ENCODE measurements at regions of chr11 and their contacts with region 1.

Region 1: DNA sequence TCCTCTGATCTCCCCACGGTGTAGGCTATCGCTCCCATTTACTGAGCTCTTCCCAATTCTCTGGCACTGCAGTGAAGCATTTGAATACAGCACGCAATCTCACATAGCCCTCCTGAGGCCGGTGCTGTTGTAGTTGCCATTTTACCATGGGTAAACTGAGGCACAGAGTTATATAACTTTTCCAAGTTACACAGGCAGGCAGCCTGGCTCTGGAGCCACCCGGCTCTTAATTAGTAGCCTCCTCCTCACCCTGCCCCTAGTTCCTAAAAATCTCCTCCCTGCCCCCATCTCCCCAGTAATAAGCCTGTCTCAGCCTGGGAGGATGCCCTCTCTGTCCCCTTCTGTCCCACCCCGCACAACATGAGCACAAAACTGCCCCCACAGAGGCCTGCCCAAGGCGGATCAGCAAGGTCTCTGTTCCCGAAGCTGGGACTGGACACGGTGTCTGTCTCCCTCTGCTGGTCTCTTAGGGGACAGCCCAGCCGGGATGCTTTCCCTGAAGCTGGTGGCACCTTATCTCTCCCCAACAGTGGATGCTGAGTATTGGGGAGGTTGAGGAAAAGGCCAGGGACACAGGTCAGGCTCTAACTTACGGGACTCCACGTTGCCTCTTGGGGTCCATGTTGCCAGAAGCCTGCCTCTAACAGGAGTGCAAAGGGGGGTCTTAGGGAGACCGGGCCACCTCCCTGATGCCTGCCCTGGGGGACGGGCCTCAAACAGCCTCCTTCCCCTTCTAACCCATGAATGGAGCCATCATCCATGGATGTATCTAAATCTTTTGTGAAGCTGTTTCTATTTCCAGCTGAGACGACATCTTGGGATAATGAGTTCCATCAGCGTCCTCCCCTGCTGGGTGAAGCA is 9.1 kb upstream of the CLCF1 start:
- DNase-seq: peak; percentile 74 to 83
- ATAC-seq: peak; percentile 63 to 65
- H3K4me3 ChIP-seq: no peak overlapping the region
- H3K27ac ChIP-seq: peak overlapping the region; percentile 95 to 100
- H3K4me1 ChIP-seq: peaks cover 82% of the 10 kb centered on the region
- CTCF ChIP-seq: peak; percentile 98
- EP300 ChIP-seq: no peak
- POLR2A ChIP-seq: no peak
- RAD21 ChIP-seq: peak; percentile 99 to 100

Region 2: DNA sequence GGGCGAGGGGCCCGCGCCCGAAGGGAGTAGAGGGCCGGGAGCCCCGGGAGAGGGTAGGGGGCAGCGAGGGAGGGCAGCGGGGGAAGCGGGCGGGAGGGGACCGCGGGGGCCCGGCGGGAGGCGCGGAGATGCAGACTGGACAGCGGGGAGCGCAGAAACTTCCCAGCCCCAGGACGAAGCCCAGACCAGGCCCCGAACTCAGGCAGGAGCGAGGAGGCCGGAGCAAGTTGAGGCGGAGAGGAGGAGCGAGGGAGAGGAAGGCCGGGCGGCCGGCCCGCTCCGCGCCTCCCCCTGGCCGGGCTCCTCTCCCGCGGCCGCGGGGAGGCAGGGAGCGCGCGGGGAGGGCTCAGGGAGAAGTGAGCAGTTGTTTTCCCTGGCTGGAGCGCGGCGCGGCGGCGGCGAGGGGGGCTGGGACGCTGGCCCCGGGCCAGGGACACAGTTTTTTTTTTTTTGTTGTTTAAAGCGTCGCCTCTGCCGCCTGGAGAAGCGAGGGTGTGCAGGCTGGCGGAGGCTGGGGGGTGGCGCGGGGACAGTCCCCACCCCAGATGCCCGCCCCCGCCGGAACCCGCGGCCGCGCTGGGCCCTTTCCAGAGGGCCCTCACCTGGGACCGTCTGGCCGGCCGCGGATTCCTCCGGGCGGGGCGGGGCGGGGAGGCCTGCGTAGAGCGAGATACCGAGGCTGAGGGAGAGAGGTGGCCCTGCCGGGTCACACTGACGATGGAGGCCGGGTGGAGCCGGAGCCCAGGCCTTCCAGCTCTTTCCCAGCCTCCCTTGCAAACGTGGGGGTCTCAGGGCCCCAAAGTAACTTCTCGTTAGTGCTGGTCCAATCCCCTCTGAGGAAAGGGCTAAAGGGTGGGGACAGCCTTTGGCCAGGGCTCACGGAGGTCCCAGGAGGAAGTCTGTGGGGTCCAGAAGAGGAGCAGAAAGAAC is 1824.2 kb before region 1 on chr11 and contains the start of gene LTBP3:
- CTCF ChIA-PET with region 1: no interaction called
- POLR2A ChIA-PET with region 1: no interaction called
- DNase-seq: peak; percentile 59 to 64
- ATAC-seq: peak; percentile 9 to 30; a peak in 5 of 6 replicates
- H3K4me3 ChIP-seq: peak within 1 kb of the TSS; percentile 62
- H3K27ac ChIP-seq: peak within 1 kb of the TSS; percentile 94 to 99
- H3K4me1 ChIP-seq: peaks cover 75% of the 10 kb centered on the region
- CTCF ChIP-seq: no peak
- EP300 ChIP-seq: no peak; a peak in 1 of 5 replicates
- POLR2A ChIP-seq: 0 out of 2 replicates have a peak, but pooled peaks have one; percentile 18
- RAD21 ChIP-seq: no peak
- polyA plus RNA-seq, gene LTBP3: 28.6 and 39.9 TPM in 2 replicates

Region 3: GRCh38 chr11:67303132-67303834 is 79.2 kb before region 1 on chr11 and contains the start of gene SSH3:
- CTCF ChIA-PET with region 1: interaction called, 13 read pairs
- POLR2A ChIA-PET with region 1: no interaction called
- DNase-seq: peak; percentile 71 to 74
- ATAC-seq: peak; percentile 85 to 91
- H3K4me3 ChIP-seq: peak within 1 kb of the TSS; percentile 93
- H3K27ac ChIP-seq: peak within 1 kb of the TSS; percentile 93 to 94
- H3K4me1 ChIP-seq: peaks cover 22% of the 10 kb centered on the region; the same call in 2 of the 3 replicates
- CTCF ChIP-seq: no peak
- EP300 ChIP-seq: no peak
- POLR2A ChIP-seq: peak; percentile 65
- RAD21 ChIP-seq: no peak
- polyA plus RNA-seq, gene SSH3: 13.7 and 13.9 TPM in 2 replicates

Region 4: DNA sequence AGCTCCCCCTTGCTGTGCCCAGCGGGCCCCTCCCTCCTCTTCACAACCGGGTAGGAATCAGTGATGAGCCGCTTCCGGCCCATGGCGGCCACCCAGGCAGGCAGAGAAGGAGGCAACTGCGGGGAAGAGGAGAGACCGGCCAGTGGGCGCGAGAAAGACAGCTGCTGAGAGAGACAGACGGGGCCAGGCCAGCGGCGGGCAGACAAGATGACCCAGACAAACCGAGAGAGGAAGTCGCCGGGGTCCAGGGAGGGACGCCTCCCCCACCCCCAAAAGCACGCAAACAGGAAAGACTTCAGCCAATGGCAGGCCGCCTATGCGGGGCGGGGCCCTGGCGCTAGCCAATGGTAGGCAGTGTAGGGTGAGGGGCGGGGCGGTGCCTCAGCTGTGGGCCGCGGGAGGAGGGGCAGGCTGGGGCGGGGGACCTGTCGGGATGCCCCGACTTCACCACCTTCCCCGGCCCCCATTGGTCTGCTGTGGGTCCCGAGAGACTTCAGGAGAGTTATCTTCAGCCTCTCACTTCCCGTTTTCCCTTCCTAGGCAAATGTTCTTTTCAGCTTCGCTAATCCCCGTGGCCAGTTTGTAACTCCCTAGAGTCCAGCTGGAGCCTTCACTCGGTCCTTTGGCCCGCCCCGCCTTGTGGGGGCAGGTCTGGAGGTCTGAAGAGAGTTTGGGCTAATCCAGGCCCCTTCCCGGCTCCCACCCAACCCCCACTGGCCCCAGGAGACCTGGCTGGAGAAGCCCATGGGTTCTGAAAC is 29.0 kb before region 1 on chr11 and contains the start of gene POLD4:
- CTCF ChIA-PET with region 1: interaction called, 1,913 read pairs
- POLR2A ChIA-PET with region 1: interaction called, 172 read pairs
- DNase-seq: peak; percentile 95 to 97
- ATAC-seq: peak; percentile 46 to 74
- H3K4me3 ChIP-seq: peak within 1 kb of the TSS; percentile 69
- H3K27ac ChIP-seq: peak within 1 kb of the TSS; percentile 93 to 98
- H3K4me1 ChIP-seq: peaks cover 87% of the 10 kb centered on the region
- CTCF ChIP-seq: no peak
- EP300 ChIP-seq: no peak
- POLR2A ChIP-seq: peak; percentile 30; the same call in 1 of the 2 replicates
- RAD21 ChIP-seq: no peak
- polyA plus RNA-seq, gene POLD4: 140 and 157 TPM in 2 replicates

Region 5: GRCh38 chr11:67415501-67416304 is 33.2 kb after region 1 on chr11 and contains the start of gene CARNS1:
- CTCF ChIA-PET with region 1: interaction called, 12 read pairs
- POLR2A ChIA-PET with region 1: no interaction called
- DNase-seq: no peak
- ATAC-seq: no peak
- H3K4me3 ChIP-seq: peak within 1 kb of the TSS; percentile 36
- H3K27ac ChIP-seq: peak within 1 kb of the TSS; percentile 46 to 84; a peak in 4 of 6 replicates
- H3K4me1 ChIP-seq: peaks cover 35% of the 10 kb centered on the region
- CTCF ChIP-seq: no peak
- EP300 ChIP-seq: no peak
- POLR2A ChIP-seq: no peak
- RAD21 ChIP-seq: no peak
- polyA plus RNA-seq, gene CARNS1: 0.08 and 0.15 TPM in 2 replicates

Region 6: GRCh38 chr11:67468835-67469811 is 86.6 kb after region 1 on chr11 and contains the start of gene TMEM134:
- CTCF ChIA-PET with region 1: interaction called, 13 read pairs
- POLR2A ChIA-PET with region 1: no interaction called
- DNase-seq: peak; percentile 81 to 94
- ATAC-seq: peak; percentile 75 to 78
- H3K4me3 ChIP-seq: peak within 1 kb of the TSS; percentile 67
- H3K27ac ChIP-seq: peak within 1 kb of the TSS; percentile 83 to 97
- H3K4me1 ChIP-seq: peaks cover 28% of the 10 kb centered on the region
- CTCF ChIP-seq: peak; percentile 53
- EP300 ChIP-seq: no peak
- POLR2A ChIP-seq: peak; percentile 73
- RAD21 ChIP-seq: peak; percentile 54 to 74
- polyA plus RNA-seq, gene TMEM134: 18.1 and 18.8 TPM in 2 replicates

Region 7: GRCh38 chr11:68003846-68004550 is 621.5 kb after region 1 on chr11 and contains the start of gene UNC93B1:
- CTCF ChIA-PET with region 1: no interaction called
- POLR2A ChIA-PET with region 1: no interaction called
- DNase-seq: peak in 1 of 2 experiments; percentile 92
- ATAC-seq: peak; percentile 73 to 85
- H3K4me3 ChIP-seq: peak within 1 kb of the TSS; percentile 97
- H3K27ac ChIP-seq: peak within 1 kb of the TSS; percentile 91 to 99
- H3K4me1 ChIP-seq: peaks cover 44% of the 10 kb centered on the region
- CTCF ChIP-seq: no peak
- EP300 ChIP-seq: no peak
- POLR2A ChIP-seq: peak; percentile 48
- RAD21 ChIP-seq: no peak
- polyA plus RNA-seq, gene UNC93B1: 49.4 and 55.5 TPM in 2 replicates

Measured in A549 (cell line).